ENCODE measurements at regions of chr15 and their contacts with region 1.

Region 1: GRCh38 chr15:90716976-90717821 is at the start of gene BLM:
- DNase-seq: peak; percentile 98 to 99 (median 99)
- ATAC-seq: peak; percentile 99
- H3K4me3 ChIP-seq: peak within 1 kb of the TSS; percentile 73
- H3K27ac ChIP-seq: peak within 1 kb of the TSS; percentile 96
- H3K4me1 ChIP-seq: peaks cover 6 to 10% of the 10 kb centered on the region in 2 experiments; a peak in 4 of 5 replicates
- H3K27me3 ChIP-seq: no peaks in the 10 kb centered on the region
- CTCF ChIP-seq: peak; percentile 23 to 41 (median 38); a peak in 3 of 6 replicates
- EP300 ChIP-seq: 0 out of 2 replicates have a peak, but pooled peaks have one; percentile 5
- POLR2A ChIP-seq: peak; percentile 95
- RAD21 ChIP-seq: no peak
- polyA plus RNA-seq, gene BLM: 21.0 to 29.7 TPM

Region 2: DNA sequence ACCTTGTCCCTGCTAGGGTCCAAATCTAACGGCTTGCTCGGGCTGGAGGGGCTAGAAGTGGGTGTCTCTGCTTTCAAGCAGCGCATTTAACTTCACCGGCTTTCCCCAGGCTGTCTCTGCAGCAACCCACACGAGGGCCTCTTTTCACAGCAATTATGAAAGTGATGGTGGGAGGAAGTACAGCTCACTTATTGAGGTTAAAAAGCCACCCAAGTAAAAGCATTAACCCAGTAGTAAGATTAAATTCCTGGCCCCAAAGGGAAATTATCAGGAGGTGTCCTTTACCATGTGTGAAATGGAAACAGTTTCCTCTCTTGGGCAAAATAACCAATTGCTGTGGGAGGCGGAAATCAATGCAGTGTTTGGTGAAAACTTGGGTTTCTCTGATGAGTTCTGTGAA is 410.6 kb before region 1 on chr15:
- CTCF ChIA-PET with region 1: no interaction called
- POLR2A ChIA-PET with region 1: no interaction called
- in situ Hi-C with region 1: no loop called
- intact Hi-C with region 1: no loop called
- DNase-seq: no peak
- ATAC-seq: peak; percentile 38; the same call in 1 of the 3 replicates
- H3K4me3 ChIP-seq: no peak overlapping the region
- H3K27ac ChIP-seq: no peak overlapping the region
- H3K4me1 ChIP-seq: peaks cover under 1 to 11% of the 10 kb centered on the region in 2 experiments; a peak in 4 of 5 replicates
- H3K27me3 ChIP-seq: no peaks in the 10 kb centered on the region
- CTCF ChIP-seq: 0 out of 6 replicates have a peak, but pooled peaks of 1 of the 3 experiments have one; percentile 1
- EP300 ChIP-seq: no peak
- POLR2A ChIP-seq: no peak
- RAD21 ChIP-seq: no peak

Region 3: DNA sequence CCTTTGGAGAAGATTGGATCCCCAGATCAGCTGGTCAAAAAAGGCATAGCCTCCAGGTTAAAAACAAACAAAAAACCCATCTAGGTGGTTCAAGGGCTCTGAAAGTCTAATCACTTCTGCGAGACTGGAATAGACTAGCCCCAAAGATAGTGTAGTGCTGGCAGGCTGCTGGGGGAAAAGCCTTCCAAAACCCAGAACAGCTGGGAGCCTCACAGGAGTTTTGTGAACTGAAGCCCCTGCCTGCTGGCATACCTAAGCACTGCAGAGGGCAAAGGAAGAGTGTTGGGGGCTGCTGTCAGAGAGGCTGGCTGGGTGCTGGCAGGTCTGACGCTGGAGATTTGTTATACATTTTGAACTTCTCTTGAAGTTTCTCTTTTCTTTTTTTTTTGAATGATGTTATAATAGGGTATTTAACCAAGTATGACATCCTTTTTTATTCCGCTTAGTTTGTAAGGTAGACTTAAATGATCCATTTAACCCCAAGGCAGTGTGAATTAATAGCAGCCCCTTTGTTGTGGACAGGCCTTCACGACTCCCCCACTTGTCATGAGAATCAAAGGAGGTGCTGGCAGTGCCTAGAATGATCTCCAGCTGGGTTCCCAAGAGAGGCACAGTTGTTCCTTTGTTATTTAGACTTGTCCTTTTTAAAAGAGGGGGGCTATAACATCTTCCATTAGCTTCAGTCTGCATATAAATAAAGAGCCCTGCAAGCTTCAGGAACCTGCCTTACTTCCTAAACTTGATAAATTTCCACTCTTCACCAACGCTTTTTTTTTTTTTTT is 133.5 kb before region 1 on chr15:
- CTCF ChIA-PET with region 1: no interaction called
- POLR2A ChIA-PET with region 1: no interaction called
- in situ Hi-C with region 1: no loop called
- intact Hi-C with region 1: no loop called
- DNase-seq: no peak
- ATAC-seq: no peak
- H3K4me3 ChIP-seq: no peak overlapping the region
- H3K27ac ChIP-seq: no peak overlapping the region
- H3K4me1 ChIP-seq: peaks cover 0 to 4% of the 10 kb centered on the region in 2 experiments; a peak in 2 of 5 replicates
- H3K27me3 ChIP-seq: no peaks in the 10 kb centered on the region
- CTCF ChIP-seq: no peak
- EP300 ChIP-seq: no peak
- POLR2A ChIP-seq: no peak
- RAD21 ChIP-seq: no peak

Region 4: DNA sequence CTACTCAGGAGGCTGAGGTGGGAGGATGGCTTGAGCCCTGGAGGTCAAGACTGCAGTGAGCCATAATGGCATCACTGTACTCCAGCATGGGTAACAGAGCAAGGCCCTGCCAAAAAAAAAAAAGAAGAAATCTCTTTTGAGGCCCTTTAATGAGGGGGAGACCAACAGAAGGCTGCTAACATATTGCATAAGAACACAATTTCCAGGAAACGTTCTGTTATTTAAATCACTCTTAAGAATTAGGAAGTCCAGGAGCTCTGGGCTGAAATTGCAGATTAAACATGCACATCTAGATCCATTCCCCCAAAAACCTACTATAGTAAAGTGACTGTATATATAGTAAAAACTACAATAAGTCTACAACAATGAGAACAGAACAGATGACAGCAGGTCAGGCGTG is 16.2 kb before region 1 on chr15:
- CTCF ChIA-PET with region 1: no interaction called
- POLR2A ChIA-PET with region 1: interaction called, 12 read pairs
- in situ Hi-C with region 1: no loop called
- intact Hi-C with region 1: no loop called
- DNase-seq: no peak
- ATAC-seq: no peak
- H3K4me3 ChIP-seq: no peak overlapping the region
- H3K27ac ChIP-seq: no peak overlapping the region
- H3K4me1 ChIP-seq: no peaks in the 10 kb centered on the region; a peak in 1 of 5 replicates
- H3K27me3 ChIP-seq: no peaks in the 10 kb centered on the region
- CTCF ChIP-seq: no peak
- EP300 ChIP-seq: no peak
- POLR2A ChIP-seq: no peak
- RAD21 ChIP-seq: no peak

Region 5: GRCh38 chr15:90742087-90742486 is 24.9 kb after region 1 on chr15:
- CTCF ChIA-PET with region 1: no interaction called
- POLR2A ChIA-PET with region 1: interaction called, 11 read pairs
- in situ Hi-C with region 1: no loop called
- intact Hi-C with region 1: no loop called
- DNase-seq: peak in 3 of 4 experiments; percentile 19 to 47 (median 45)
- ATAC-seq: peak; percentile 83
- H3K4me3 ChIP-seq: no peak overlapping the region
- H3K27ac ChIP-seq: peak overlapping the region; percentile 44; the same call in 1 of the 3 replicates
- H3K4me1 ChIP-seq: peaks cover 2 to 4% of the 10 kb centered on the region in 2 experiments; a peak in 3 of 5 replicates
- H3K27me3 ChIP-seq: no peaks in the 10 kb centered on the region
- CTCF ChIP-seq: no peak
- EP300 ChIP-seq: no peak
- POLR2A ChIP-seq: no peak
- RAD21 ChIP-seq: no peak

Measured in K562 (cell line).